MCF 10A (cell line): ENCODE measurements at regions of chr18 and their contacts with region 1.

Region 1: DNA sequence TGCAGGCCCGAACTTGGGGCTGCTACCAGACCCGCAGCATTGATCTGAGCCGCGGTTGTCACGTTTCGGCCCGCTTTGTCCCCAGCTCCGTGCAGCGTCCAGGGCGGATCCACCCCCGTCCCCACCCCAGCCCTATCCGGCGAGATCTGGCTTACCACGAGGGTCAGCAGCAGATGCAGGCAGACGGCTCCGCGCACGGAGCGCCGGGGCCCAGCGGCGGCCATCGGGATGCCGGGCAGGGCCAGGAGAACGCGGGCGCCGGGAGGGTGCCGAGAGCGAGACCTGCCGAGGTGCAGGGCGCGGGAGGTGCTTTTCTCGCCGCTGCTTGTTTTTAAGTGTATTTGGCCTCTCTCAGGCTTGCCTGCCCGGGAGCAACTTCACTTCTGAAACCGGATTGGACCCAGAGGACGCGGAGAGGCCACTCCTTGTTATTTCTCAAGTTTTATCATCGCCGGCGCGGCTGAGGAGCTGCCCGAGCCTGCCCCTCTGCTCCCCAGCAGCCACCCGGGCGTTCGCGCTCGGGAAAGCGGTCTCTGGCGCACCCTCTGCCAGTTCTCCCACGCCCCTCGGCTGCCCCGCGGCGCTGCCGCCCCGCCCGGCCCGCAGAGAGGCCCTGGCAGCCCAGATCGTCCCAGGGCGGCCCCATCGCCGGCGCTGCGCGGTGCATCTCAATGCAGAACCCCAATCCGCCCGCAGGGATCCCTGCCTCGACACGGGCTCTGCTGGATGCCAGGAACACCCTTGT is at the start of gene DSC3:
- DNase-seq: peak; percentile 93
- H3K4me3 Mint-ChIP-seq: peak within 1 kb of the TSS; percentile 97
- H3K27ac Mint-ChIP-seq: peak within 1 kb of the TSS; percentile 98
- H3K4me1 Mint-ChIP-seq: peaks cover 45% of the 10 kb centered on the region
- H3K27me3 Mint-ChIP-seq: no peaks in the 10 kb centered on the region
- CTCF ChIP-seq: no peak
- total RNA-seq, gene DSC3: 56.2 and 60.8 TPM in 2 replicates

Region 2: GRCh38 chr18:30957066-30957465 is 85.5 kb before region 1 on chr18:
- CTCF ChIA-PET with region 1: no interaction called
- POLR2A ChIA-PET with region 1: no interaction called
- intact Hi-C with region 1: no loop called
- DNase-seq: no peak
- H3K4me3 Mint-ChIP-seq: no peak overlapping the region
- H3K27ac Mint-ChIP-seq: no peak overlapping the region
- H3K4me1 Mint-ChIP-seq: no peaks in the 10 kb centered on the region
- H3K27me3 Mint-ChIP-seq: peaks cover 16% of the 10 kb centered on the region
- CTCF ChIP-seq: no peak

Region 3: GRCh38 chr18:30987450-30988241 is 55.0 kb before region 1 on chr18:
- CTCF ChIA-PET with region 1: no interaction called
- POLR2A ChIA-PET with region 1: interaction called, 25 read pairs
- intact Hi-C with region 1: no loop called
- DNase-seq: peak; percentile 98
- H3K4me3 Mint-ChIP-seq: peak overlapping the region; percentile 47
- H3K27ac Mint-ChIP-seq: peak overlapping the region; percentile 91
- H3K4me1 Mint-ChIP-seq: peaks cover 16% of the 10 kb centered on the region
- H3K27me3 Mint-ChIP-seq: no peaks in the 10 kb centered on the region
- CTCF ChIP-seq: no peak

Region 4: DNA sequence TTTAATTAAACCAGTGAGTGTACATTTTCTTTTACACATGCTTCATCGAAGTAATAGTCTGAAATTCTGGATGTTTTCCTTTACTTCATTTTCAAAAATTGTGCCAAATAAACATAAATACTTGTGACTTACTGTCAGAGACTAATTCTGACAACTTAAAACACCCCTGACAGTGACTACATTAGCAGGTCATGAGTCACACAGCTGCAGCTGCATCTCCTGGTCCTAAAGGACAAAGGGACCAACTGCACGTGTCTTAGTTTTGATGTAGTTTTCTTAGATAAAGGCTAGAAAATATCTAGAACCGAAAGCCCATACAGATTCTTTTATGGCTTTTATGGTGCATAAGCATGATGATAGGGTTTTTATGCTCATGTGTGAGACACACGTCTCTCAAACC is 29.6 kb after region 1 on chr18:
- CTCF ChIA-PET with region 1: interaction called, 8 read pairs
- POLR2A ChIA-PET with region 1: interaction called, 46 read pairs
- intact Hi-C with region 1: no loop called
- DNase-seq: no peak
- H3K4me3 Mint-ChIP-seq: no peak overlapping the region
- H3K27ac Mint-ChIP-seq: no peak overlapping the region
- H3K4me1 Mint-ChIP-seq: peaks cover 7% of the 10 kb centered on the region
- H3K27me3 Mint-ChIP-seq: no peaks in the 10 kb centered on the region
- CTCF ChIP-seq: no peak

Region 5: GRCh38 chr18:31206787-31207381 is 164.3 kb after region 1 on chr18:
- CTCF ChIA-PET with region 1: interaction called, 3 read pairs
- POLR2A ChIA-PET with region 1: interaction called, 25 read pairs
- intact Hi-C with region 1: no loop called
- DNase-seq: peak; percentile 94
- H3K4me3 Mint-ChIP-seq: peak overlapping the region; percentile 69
- H3K27ac Mint-ChIP-seq: peak overlapping the region; percentile 77
- H3K4me1 Mint-ChIP-seq: peaks cover 32% of the 10 kb centered on the region
- H3K27me3 Mint-ChIP-seq: no peaks in the 10 kb centered on the region
- CTCF ChIP-seq: peak; percentile 7

Region 6: GRCh38 chr18:31255953-31256352 is 213.3 kb after region 1 on chr18:
- CTCF ChIA-PET with region 1: no interaction called
- POLR2A ChIA-PET with region 1: interaction called, 20 read pairs
- intact Hi-C with region 1: no loop called
- DNase-seq: peak; percentile 85
- H3K4me3 Mint-ChIP-seq: peak overlapping the region; percentile 12
- H3K27ac Mint-ChIP-seq: peak overlapping the region; percentile 64
- H3K4me1 Mint-ChIP-seq: peaks cover 16% of the 10 kb centered on the region
- H3K27me3 Mint-ChIP-seq: no peaks in the 10 kb centered on the region
- CTCF ChIP-seq: no peak

Region 7: GRCh38 chr18:31447530-31448191 is 405.1 kb after region 1 on chr18 and contains the start of gene DSG3:
- CTCF ChIA-PET with region 1: interaction called, 3 read pairs
- POLR2A ChIA-PET with region 1: interaction called, 170 read pairs
- intact Hi-C with region 1: loop called (anchors 5 kb)
- DNase-seq: peak; percentile 94
- H3K4me3 Mint-ChIP-seq: peak within 1 kb of the TSS; percentile 75
- H3K27ac Mint-ChIP-seq: peak within 1 kb of the TSS; percentile 88
- H3K4me1 Mint-ChIP-seq: peaks cover 9% of the 10 kb centered on the region
- H3K27me3 Mint-ChIP-seq: no peaks in the 10 kb centered on the region
- CTCF ChIP-seq: no peak
- total RNA-seq, gene DSG3: 65.4 and 68.5 TPM in 2 replicates

Region 8: GRCh38 chr18:31497837-31498573 is 455.4 kb after region 1 on chr18 and contains the start of gene DSG2:
- CTCF ChIA-PET with region 1: interaction called, 3 read pairs
- POLR2A ChIA-PET with region 1: interaction called, 21 read pairs
- intact Hi-C with region 1: no loop called
- DNase-seq: peak; percentile 83
- H3K4me3 Mint-ChIP-seq: peak within 1 kb of the TSS; percentile 87
- H3K27ac Mint-ChIP-seq: peak within 1 kb of the TSS; percentile 66
- H3K4me1 Mint-ChIP-seq: peaks cover 19% of the 10 kb centered on the region
- H3K27me3 Mint-ChIP-seq: no peaks in the 10 kb centered on the region
- CTCF ChIP-seq: no peak
- total RNA-seq, gene DSG2: 106 and 134 TPM in 2 replicates